ENCODE measurements at regions of chr17 and their contacts with region 1.

Region 1: GRCh38 chr17:38485146-38485468 is 56.8 kb downstream of the ARHGAP23 start:
- DNase-seq: no peak
- H3K4me3 ChIP-seq: no peak overlapping the region
- H3K27ac ChIP-seq: peak overlapping the region; percentile 81 to 86
- H3K4me1 ChIP-seq: peaks cover 4 to 24% of the 10 kb centered on the region in 2 donors
- H3K27me3 ChIP-seq: no peaks in the 10 kb centered on the region
- CTCF ChIP-seq: no peak

Region 2: DNA sequence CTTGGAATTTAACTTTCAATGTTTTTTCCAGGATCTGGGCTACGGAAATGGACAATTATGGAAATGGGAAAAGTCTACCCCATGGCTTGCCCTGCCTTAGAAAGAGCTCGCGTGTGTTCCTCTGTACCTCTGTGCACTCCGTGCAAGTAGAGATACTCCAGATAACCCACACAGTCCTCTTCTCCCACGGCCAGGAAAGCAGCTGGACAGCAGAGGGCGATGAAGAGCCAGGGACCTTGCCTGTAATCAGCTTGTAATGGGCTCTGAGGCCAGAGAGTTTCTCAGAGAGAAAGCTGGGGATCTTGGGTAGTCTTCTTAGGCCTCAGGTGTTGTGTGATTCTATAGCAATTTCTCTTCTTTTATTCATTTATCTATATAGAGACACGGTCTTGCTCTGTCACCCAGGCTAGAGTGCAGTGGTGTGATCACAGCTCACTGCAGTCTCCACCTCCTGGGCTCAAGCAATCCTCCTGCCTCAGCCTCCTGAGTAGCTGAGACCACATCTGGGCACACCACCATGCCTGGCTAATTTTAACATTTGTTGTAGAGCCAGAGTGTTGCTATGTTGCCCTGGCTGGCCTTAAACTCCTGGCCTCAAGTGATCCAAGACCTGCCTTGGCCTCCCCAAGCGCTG is 135.9 kb before region 1 on chr17:
- intact Hi-C with region 1: loop called (anchors 2 kb)
- DNase-seq: peak; percentile 51 to 90
- H3K4me3 ChIP-seq: no peak overlapping the region
- H3K27ac ChIP-seq: peak overlapping the region; percentile 37 to 48
- H3K4me1 ChIP-seq: peaks cover 5 to 6% of the 10 kb centered on the region in 2 donors
- H3K27me3 ChIP-seq: no peaks in the 10 kb centered on the region
- CTCF ChIP-seq: peak; percentile 83 to 89 (median 84)

Region 3: DNA sequence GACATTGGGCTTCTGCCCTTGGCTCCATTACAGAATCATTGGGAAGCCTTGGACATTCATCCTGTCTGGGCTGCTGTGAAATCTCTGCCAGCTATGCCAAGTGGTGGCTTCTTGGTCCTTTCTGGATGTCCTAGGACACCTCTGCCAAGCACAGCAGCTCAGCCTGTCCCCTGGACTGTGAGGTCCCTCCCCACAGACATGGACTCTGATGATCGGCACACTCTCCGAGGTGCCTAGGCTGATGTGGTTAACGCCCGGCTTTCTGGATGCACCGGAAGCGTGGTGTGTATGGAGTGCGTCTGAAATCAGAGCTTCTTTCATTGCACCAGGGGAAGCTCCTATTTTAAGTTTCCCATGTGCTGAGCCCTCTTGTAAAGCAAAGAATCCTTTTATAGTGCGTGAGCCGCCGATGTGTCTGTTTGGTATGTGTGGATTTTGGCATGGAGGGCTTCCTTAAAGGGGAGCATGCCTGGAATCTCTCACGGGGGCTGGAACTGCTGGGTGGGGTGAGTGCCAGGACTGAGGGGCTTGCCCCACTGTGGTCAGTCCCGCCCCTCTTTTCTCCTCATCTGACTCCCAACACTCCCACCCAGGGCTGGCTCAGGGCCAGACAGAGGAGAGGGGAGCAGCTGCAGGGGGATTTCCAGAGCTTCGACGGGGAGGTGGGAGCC is 63.8 kb before region 1 on chr17:
- intact Hi-C with region 1: loop called (anchors 2 kb)
- DNase-seq: peak in 1 of 2 donors; percentile 81
- H3K4me3 ChIP-seq: peak overlapping the region; percentile 14 to 50
- H3K27ac ChIP-seq: peak overlapping the region; percentile 82 to 84
- H3K4me1 ChIP-seq: peaks cover 15 to 43% of the 10 kb centered on the region in 2 donors
- H3K27me3 ChIP-seq: no peaks in the 10 kb centered on the region
- CTCF ChIP-seq: no peak

Region 4: GRCh38 chr17:38444151-38444550 is 41.0 kb before region 1 on chr17:
- intact Hi-C with region 1: loop called (anchors 1 kb)
- DNase-seq: peak in 1 of 2 donors; percentile 83
- H3K4me3 ChIP-seq: no peak overlapping the region
- H3K27ac ChIP-seq: peak overlapping the region; percentile 74 to 75
- H3K4me1 ChIP-seq: peaks cover 15 to 38% of the 10 kb centered on the region in 2 donors
- H3K27me3 ChIP-seq: no peaks in the 10 kb centered on the region
- CTCF ChIP-seq: peak; percentile 86 to 89 (median 87)

Region 5: DNA sequence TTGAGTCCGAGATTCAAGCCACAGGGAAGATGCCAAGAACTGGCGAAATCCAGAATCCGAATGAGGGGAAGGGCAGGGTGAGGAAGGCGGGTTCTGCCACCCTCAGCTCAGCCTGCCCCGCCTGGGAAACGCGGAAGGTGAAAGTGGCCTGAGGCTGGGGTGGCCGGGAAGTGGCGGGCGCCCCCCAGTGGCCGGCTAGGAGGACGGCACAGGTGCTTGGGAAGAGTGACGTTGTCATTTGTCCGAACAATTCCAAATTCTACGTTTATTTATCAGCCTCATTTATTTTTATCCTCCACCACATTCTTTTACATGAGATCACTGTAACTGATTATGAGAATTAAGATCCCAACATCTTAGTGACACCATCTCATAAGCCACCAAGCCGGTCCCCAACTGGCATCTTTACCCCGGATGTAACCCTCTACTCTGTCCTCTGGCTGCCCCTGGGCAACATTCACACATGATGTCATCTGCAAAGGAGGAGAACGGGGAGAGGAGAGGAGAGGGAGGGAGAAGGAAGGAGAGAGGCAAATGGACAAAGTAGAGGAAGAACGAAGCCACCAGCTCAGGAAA is 99.3 kb after region 1 on chr17:
- intact Hi-C with region 1: no loop called
- DNase-seq: peak in 1 of 2 donors; percentile 79
- H3K4me3 ChIP-seq: no peak overlapping the region
- H3K27ac ChIP-seq: no peak overlapping the region
- H3K4me1 ChIP-seq: peaks cover 0 to 6% of the 10 kb centered on the region in 2 donors
- H3K27me3 ChIP-seq: peaks cover 5% of the 10 kb centered on the region
- CTCF ChIP-seq: peak; percentile 88 to 98 (median 95)

Region 6: GRCh38 chr17:38667099-38667786 is 182.1 kb after region 1 on chr17:
- intact Hi-C with region 1: loop called (anchors 5 kb)
- DNase-seq: peak in 1 of 2 donors; percentile 81
- H3K4me3 ChIP-seq: no peak overlapping the region
- H3K27ac ChIP-seq: no peak overlapping the region
- H3K4me1 ChIP-seq: no peaks in the 10 kb centered on the region
- H3K27me3 ChIP-seq: no peaks in the 10 kb centered on the region
- CTCF ChIP-seq: peak; percentile 93 to 99 (median 98)